ENCODE measurements at regions of chr16 and their contacts with region 1.

Region 1: GRCh38 chr16:88920618-88921590 is 54.4 kb upstream of the PABPN1L start:
- DNase-seq: no peak
- H3K4me3 ChIP-seq: no peak overlapping the region
- H3K27ac ChIP-seq: no peak overlapping the region
- H3K4me1 ChIP-seq: peaks cover 44% of the 10 kb centered on the region
- H3K27me3 ChIP-seq: no peaks in the 10 kb centered on the region
- CTCF ChIP-seq: no peak

Region 2: GRCh38 chr16:88878967-88879787 is 41.7 kb before region 1 on chr16:
- CTCF ChIA-PET with region 1: no interaction called
- dilution Hi-C with region 1: loop called (anchors 5 kb)
- in situ Hi-C with region 1: no loop called
- intact Hi-C with region 1: no loop called
- DNase-seq: peak; percentile 67
- H3K4me3 ChIP-seq: no peak overlapping the region
- H3K27ac ChIP-seq: no peak overlapping the region
- H3K4me1 ChIP-seq: peaks cover 26% of the 10 kb centered on the region
- H3K27me3 ChIP-seq: no peaks in the 10 kb centered on the region
- CTCF ChIP-seq: no peak

Measured in mammary epithelial cell (primary cell).